ENCODE measurements at regions of chr16 and their contacts with region 1.

Region 1: GRCh38 chr16:68448360-68448970 is at the start of gene SMPD3:
- DNase-seq: peak; percentile 100
- H3K4me3 ChIP-seq: peak within 1 kb of the TSS; percentile 43
- H3K4me3 Mint-ChIP-seq: peak within 1 kb of the TSS; percentile 77
- H3K27ac Mint-ChIP-seq: peak within 1 kb of the TSS; percentile 58
- H3K4me1 ChIP-seq: peaks cover 28% of the 10 kb centered on the region
- H3K4me1 Mint-ChIP-seq: peaks cover 27% of the 10 kb centered on the region
- H3K27me3 ChIP-seq: peaks cover 2% of the 10 kb centered on the region; the same call in 1 of the 2 replicates
- H3K27me3 Mint-ChIP-seq: peaks cover 14% of the 10 kb centered on the region
- CTCF ChIP-seq: peak in 1 of 2 experiments; percentile 8
- total RNA-seq, gene SMPD3: 2.4 and 2.8 TPM in 2 replicates

Region 2: DNA sequence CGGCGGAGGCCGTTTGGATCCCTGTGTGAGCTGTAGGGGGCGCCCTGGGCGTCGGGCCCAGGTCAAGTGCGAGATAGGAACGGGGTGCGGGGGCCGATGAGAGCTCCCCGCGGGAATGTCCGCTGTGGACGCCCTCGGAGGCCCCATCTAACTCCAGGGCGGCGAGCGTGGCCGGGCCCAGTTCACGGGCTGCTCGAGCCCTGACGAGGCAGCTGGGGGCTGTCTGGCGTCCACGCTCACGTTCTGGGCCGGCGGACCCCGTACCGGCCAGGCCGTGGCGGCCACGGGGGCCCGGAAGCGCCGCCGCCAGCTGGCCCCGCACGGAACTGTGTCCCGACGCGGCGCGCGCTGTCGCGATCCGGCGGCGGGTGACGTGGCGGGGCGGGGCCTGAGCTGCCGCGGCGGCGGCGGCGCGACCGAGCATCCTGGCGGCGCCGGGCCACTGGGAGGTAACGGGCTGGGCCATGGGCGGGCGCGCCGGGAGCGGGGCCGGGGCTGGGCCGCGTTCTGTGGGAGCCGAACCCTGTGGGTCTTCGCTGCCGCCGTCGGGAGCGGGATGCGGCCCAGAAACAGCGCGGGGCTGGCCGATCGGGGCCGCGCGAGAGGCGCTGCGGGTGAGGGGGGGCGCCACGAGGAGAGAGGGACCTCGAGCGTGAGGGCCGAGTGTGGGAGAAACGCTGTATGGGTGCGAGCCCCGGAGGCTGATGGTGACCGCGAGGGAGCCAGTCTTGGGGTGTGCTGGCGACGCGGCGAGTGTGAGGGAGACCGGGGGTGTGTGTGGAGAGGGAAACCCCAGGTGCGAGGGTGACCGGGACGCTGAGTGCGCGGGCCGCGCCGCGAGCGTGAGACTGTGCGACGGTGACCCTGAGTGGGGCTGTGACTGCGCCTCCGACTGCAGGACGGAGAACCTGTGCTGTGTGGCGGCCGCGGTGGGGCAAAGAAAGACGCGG is 184.1 kb before region 1 on chr16 and contains the start of gene SLC7A6:
- CTCF ChIA-PET with region 1: no interaction called
- POLR2A ChIA-PET with region 1: no interaction called
- intact Hi-C with region 1: no loop called
- DNase-seq: peak; percentile 85 to 90
- H3K4me3 ChIP-seq: peak within 1 kb of the TSS; percentile 94
- H3K4me3 Mint-ChIP-seq: peak within 1 kb of the TSS; percentile 91
- H3K27ac Mint-ChIP-seq: peak within 1 kb of the TSS; percentile 98
- H3K4me1 ChIP-seq: peaks cover 44% of the 10 kb centered on the region
- H3K4me1 Mint-ChIP-seq: peaks cover 31% of the 10 kb centered on the region
- H3K27me3 ChIP-seq: no peaks in the 10 kb centered on the region
- H3K27me3 Mint-ChIP-seq: no peaks in the 10 kb centered on the region
- CTCF ChIP-seq: peak; percentile 77 to 79
- total RNA-seq, gene SLC7A6: 236 and 267 TPM in 2 replicates

Region 3: GRCh38 chr16:68478526-68479250 is 30.2 kb after region 1 on chr16:
- CTCF ChIA-PET with region 1: no interaction called
- POLR2A ChIA-PET with region 1: no interaction called
- intact Hi-C with region 1: loop called (anchors 2 kb)
- DNase-seq: peak in 1 of 2 experiments; percentile 32
- H3K4me3 ChIP-seq: no peak overlapping the region
- H3K4me3 Mint-ChIP-seq: no peak overlapping the region
- H3K27ac Mint-ChIP-seq: peak overlapping the region; percentile 5
- H3K4me1 ChIP-seq: peaks cover 13% of the 10 kb centered on the region
- H3K4me1 Mint-ChIP-seq: peaks cover 16% of the 10 kb centered on the region
- H3K27me3 ChIP-seq: no peaks in the 10 kb centered on the region
- H3K27me3 Mint-ChIP-seq: no peaks in the 10 kb centered on the region
- CTCF ChIP-seq: no peak

Region 4: GRCh38 chr16:68506331-68507053 is 58.0 kb after region 1 on chr16:
- CTCF ChIA-PET with region 1: no interaction called
- POLR2A ChIA-PET with region 1: no interaction called
- intact Hi-C with region 1: loop called (anchors 5 kb)
- DNase-seq: no peak
- H3K4me3 ChIP-seq: no peak overlapping the region
- H3K4me3 Mint-ChIP-seq: no peak overlapping the region
- H3K27ac Mint-ChIP-seq: no peak overlapping the region
- H3K4me1 ChIP-seq: no peaks in the 10 kb centered on the region
- H3K4me1 Mint-ChIP-seq: no peaks in the 10 kb centered on the region
- H3K27me3 ChIP-seq: peaks cover 1% of the 10 kb centered on the region; the same call in 1 of the 2 replicates
- H3K27me3 Mint-ChIP-seq: peaks cover 21% of the 10 kb centered on the region
- CTCF ChIP-seq: no peak

Region 5: DNA sequence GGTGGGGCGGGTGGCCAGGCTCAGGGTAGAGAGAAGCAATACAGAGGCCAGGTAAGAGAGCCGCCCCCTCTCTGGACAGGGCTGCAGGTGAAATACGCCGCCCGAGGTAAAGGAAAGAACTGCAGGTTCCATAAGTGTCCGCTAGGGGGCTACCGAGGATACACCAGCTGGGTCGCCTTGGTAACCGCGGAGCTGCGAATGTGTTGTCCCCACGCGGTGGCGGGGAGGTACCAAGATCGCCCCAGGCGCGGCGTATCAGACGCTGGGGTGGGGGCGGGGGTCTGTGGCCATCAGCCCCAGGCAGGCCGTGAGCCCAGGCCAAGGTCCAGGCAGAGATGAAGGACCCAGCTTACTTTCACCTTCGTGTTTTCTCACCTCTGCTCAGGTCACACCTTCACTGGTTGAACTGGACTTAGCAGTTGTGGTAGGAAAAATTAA is 72.2 kb after region 1 on chr16:
- CTCF ChIA-PET with region 1: interaction called, 9 read pairs
- POLR2A ChIA-PET with region 1: no interaction called
- intact Hi-C with region 1: loop called (anchors 2 kb)
- DNase-seq: peak; percentile 93 to 96
- H3K4me3 ChIP-seq: peak overlapping the region; percentile 6; the same call in 1 of the 2 replicates
- H3K4me3 Mint-ChIP-seq: peak overlapping the region; percentile 52
- H3K27ac Mint-ChIP-seq: peak overlapping the region; percentile 50
- H3K4me1 ChIP-seq: peaks cover 6% of the 10 kb centered on the region
- H3K4me1 Mint-ChIP-seq: peaks cover 7% of the 10 kb centered on the region
- H3K27me3 ChIP-seq: no peaks in the 10 kb centered on the region
- H3K27me3 Mint-ChIP-seq: no peaks in the 10 kb centered on the region
- CTCF ChIP-seq: peak; percentile 100

Region 6: DNA sequence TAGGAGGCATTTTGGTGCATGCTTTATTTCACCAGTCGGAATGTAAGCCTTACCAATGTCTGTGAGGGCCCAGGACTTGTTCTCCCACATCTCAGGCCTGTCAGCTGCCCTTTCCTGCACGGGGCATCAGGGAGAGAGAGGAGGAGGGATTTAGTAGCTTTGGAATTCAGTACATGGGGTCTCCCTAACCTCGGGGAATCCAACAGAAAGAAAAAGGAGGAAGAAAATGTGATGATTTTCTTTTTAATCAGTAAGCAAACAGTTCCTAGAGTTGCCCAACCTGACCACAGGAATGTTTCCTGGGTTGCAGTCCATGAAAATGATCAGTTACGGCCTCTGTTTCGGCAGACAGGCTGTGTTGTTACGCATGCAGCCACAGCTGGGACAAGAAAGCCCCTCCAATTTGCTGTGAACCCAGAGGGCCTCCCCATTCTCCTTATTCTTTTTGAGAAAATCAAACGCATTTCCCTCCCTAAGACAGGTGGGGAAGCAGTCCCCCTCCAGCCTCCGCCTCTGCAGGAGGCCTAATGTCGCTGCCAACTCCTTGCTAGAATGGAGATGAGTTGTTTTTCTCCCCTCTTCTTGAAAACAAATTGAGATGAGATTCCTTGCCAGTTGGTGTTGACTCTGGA is 341.8 kb after region 1 on chr16:
- CTCF ChIA-PET with region 1: no interaction called
- POLR2A ChIA-PET with region 1: no interaction called
- intact Hi-C with region 1: loop called (anchors 5 kb)
- DNase-seq: peak; percentile 77 to 82
- H3K4me3 ChIP-seq: no peak overlapping the region
- H3K4me3 Mint-ChIP-seq: peak overlapping the region; percentile 9
- H3K27ac Mint-ChIP-seq: peak overlapping the region; percentile 76
- H3K4me1 ChIP-seq: peaks cover 61% of the 10 kb centered on the region
- H3K4me1 Mint-ChIP-seq: peaks cover 41% of the 10 kb centered on the region
- H3K27me3 ChIP-seq: no peaks in the 10 kb centered on the region
- H3K27me3 Mint-ChIP-seq: no peaks in the 10 kb centered on the region
- CTCF ChIP-seq: no peak

Measured in Caco-2 (cell line).